CD8-positive, alpha-beta T cell (primary cell): ENCODE measurements at regions of chr14 and their contacts with region 1.

Region 1: DNA sequence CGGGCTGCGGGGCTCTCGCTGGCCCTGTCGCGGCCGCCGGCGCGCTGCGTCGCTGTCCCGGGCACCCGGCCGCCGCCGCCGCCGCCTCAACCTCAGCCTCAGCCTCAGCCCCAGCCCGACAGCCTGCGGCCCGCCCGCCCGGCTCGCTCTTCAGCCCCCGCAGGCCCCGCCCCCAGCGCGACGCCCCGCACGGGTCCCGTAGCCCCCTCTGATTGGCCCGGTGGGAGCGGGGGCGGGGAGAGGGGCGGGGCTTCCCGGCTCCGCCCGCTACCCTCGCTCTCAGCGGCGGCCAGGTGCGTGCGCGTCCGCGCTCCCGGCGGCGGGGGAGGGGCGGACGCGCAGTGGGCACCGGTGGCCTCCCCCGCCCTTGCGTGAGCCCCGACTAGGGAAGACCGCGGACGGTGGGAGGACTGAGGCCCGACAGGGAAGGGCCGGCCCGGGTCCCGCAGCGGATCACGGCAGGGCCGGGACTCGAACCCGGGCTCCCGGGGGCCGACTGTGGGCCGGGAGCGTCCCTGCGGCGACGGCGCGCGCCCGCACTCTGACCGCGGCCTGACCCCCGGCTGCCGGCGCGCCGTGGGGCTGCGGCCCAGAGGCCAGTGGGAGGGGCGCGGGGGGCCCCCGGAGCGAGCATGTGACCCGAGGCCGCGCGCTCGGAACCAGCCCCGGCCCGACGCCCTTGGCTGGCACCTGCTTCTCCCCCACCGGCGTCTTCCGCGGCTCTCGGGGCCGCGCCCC is at the start of gene PPP1R13B:
- DNase-seq: peak; percentile 88 to 97 (median 92)
- ATAC-seq: peak; percentile 98
- H3K4me3 ChIP-seq: peak within 1 kb of the TSS; percentile 65 to 73
- H3K4me3 Mint-ChIP-seq: peak within 1 kb of the TSS; percentile 90
- H3K27ac ChIP-seq: peak within 1 kb of the TSS in 1 of 2 experiments; percentile 27
- H3K27ac Mint-ChIP-seq: peak within 1 kb of the TSS; percentile 74
- H3K4me1 ChIP-seq: peaks cover 14% of the 10 kb centered on the region
- H3K4me1 Mint-ChIP-seq: peaks cover 20% of the 10 kb centered on the region
- H3K27me3 ChIP-seq: no peaks in the 10 kb centered on the region
- H3K27me3 Mint-ChIP-seq: no peaks in the 10 kb centered on the region
- CTCF ChIP-seq: no peak
- total RNA-seq, gene PPP1R13B: 20.9 to 22.6 TPM

Region 2: GRCh38 chr14:103668117-103668516 is 179.5 kb before region 1 on chr14:
- CTCF ChIA-PET with region 1: no interaction called
- POLR2A ChIA-PET with region 1: no interaction called
- intact Hi-C with region 1: no loop called
- DNase-seq: no peak
- ATAC-seq: no peak
- H3K4me3 ChIP-seq: no peak overlapping the region
- H3K4me3 Mint-ChIP-seq: no peak overlapping the region
- H3K27ac ChIP-seq: no peak overlapping the region
- H3K27ac Mint-ChIP-seq: no peak overlapping the region
- H3K4me1 ChIP-seq: no peaks in the 10 kb centered on the region
- H3K4me1 Mint-ChIP-seq: no peaks in the 10 kb centered on the region
- H3K27me3 ChIP-seq: no peaks in the 10 kb centered on the region
- H3K27me3 Mint-ChIP-seq: no peaks in the 10 kb centered on the region
- CTCF ChIP-seq: no peak

Region 3: DNA sequence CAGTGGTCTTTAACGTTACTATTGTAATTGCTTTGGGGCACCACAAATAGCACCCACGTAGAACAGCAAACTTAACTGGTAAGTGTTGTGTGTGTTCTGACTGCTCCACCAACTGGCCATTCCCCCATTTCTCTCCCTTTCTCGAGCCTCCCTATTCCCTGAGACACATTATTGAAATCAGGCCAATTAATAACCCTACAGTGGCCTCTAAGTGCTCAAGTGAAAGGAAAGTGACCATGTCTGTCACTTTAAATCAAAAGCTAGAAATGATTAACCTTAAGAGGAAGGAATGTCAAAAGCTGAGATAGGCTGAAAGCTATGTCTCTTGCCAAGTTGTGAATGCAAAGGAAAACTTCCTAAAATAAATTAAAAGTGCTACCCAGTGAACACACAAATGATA is 22.5 kb before region 1 on chr14:
- CTCF ChIA-PET with region 1: no interaction called
- POLR2A ChIA-PET with region 1: no interaction called
- intact Hi-C with region 1: no loop called
- DNase-seq: no peak
- ATAC-seq: no peak
- H3K4me3 ChIP-seq: no peak overlapping the region
- H3K4me3 Mint-ChIP-seq: no peak overlapping the region
- H3K27ac ChIP-seq: no peak overlapping the region
- H3K27ac Mint-ChIP-seq: no peak overlapping the region
- H3K4me1 ChIP-seq: peaks cover 4% of the 10 kb centered on the region
- H3K4me1 Mint-ChIP-seq: peaks cover 29% of the 10 kb centered on the region
- H3K27me3 ChIP-seq: no peaks in the 10 kb centered on the region
- H3K27me3 Mint-ChIP-seq: no peaks in the 10 kb centered on the region
- CTCF ChIP-seq: no peak

Region 4: DNA sequence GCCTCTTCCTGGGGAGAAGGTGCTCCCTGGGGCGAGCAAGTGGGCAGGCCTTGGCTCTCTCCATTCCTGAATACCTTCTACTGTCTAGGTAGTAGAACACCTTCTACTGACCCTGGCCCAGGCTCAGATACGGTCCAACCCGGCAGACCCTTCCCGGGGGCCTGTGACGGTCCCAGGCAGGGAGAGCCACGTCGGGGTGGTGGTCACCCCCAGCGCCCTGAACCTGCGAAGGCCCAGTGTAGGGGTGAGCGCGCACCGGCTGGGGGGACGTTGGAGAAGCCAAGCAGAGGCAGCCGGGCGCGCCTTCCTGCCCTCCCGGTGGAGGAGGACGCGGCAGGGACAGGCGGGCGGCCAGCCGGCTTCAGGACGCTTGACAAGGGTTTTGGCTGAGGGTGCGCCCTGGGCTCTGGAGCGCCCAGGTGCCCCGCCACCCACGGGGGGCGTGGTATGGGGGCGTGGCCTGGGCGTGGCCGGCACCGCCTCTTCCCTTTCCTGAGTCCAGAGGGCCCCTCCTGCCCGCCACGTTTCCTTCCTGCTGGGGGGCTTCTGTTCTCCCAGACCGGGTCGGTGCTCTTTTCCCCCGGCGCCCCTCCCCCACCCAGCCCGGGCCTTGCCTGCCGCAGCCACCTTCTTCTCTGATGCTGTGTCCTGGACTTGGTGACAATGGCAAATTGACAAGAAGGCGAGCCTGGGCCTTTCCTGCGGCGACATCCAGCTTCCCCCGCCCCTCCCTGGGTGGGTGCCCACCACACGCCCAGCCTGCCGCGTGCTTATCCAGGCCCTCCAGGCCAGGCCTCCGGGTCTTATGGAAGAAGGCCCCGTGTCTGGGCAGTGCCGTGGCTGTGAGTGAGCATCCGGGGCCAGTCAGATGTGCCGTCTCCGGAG is 24.2 kb after region 1 on chr14:
- CTCF ChIA-PET with region 1: no interaction called
- POLR2A ChIA-PET with region 1: no interaction called
- intact Hi-C with region 1: loop called (anchors 1 kb)
- DNase-seq: peak; percentile 42 to 86 (median 77)
- ATAC-seq: peak; percentile 83
- H3K4me3 ChIP-seq: peak overlapping the region; percentile 46 to 68
- H3K4me3 Mint-ChIP-seq: peak overlapping the region; percentile 92
- H3K27ac ChIP-seq: peak overlapping the region; percentile 23 to 61
- H3K27ac Mint-ChIP-seq: peak overlapping the region; percentile 92
- H3K4me1 ChIP-seq: peaks cover 26% of the 10 kb centered on the region
- H3K4me1 Mint-ChIP-seq: peaks cover 19% of the 10 kb centered on the region
- H3K27me3 ChIP-seq: no peaks in the 10 kb centered on the region
- H3K27me3 Mint-ChIP-seq: no peaks in the 10 kb centered on the region
- CTCF ChIP-seq: no peak

Region 5: DNA sequence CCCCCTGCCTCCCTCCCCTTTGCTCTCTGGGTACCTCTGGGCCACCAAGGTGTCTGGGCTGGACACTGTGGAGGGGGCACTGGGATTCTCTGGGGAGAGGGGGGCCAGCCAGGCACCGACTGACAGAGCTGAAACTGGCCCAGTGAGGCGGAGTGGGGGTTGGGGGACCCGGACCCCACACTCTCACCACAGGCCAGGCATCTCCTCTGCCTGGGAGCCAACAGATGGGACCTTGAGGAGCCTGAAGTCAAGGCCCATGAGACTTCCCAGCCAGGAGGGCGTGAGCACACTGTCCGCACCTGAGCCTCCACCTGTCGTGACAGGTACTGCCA is 39.5 kb after region 1 on chr14:
- CTCF ChIA-PET with region 1: no interaction called
- POLR2A ChIA-PET with region 1: no interaction called
- intact Hi-C with region 1: no loop called
- DNase-seq: no peak
- ATAC-seq: no peak
- H3K4me3 ChIP-seq: no peak overlapping the region
- H3K4me3 Mint-ChIP-seq: no peak overlapping the region
- H3K27ac ChIP-seq: no peak overlapping the region
- H3K27ac Mint-ChIP-seq: no peak overlapping the region
- H3K4me1 ChIP-seq: no peaks in the 10 kb centered on the region
- H3K4me1 Mint-ChIP-seq: no peaks in the 10 kb centered on the region
- H3K27me3 ChIP-seq: no peaks in the 10 kb centered on the region
- H3K27me3 Mint-ChIP-seq: no peaks in the 10 kb centered on the region
- CTCF ChIP-seq: no peak